T-cell (primary cell): ENCODE measurements at regions of chr1 and their contacts with region 1.

Region 1: GRCh38 chr1:178942285-178943198 is 71.7 kb upstream of the ANGPTL1 start:
- DNase-seq: no peak
- ATAC-seq: no peak
- H3K4me3 ChIP-seq: no peak overlapping the region
- H3K4me3 Mint-ChIP-seq: no peak overlapping the region
- H3K27ac ChIP-seq: no peak overlapping the region
- H3K27ac Mint-ChIP-seq: no peak overlapping the region
- H3K4me1 ChIP-seq: no peaks in the 10 kb centered on the region
- H3K4me1 Mint-ChIP-seq: no peaks in the 10 kb centered on the region
- H3K27me3 ChIP-seq: peaks cover 0 to 23% of the 10 kb centered on the region in 2 experiments
- H3K27me3 Mint-ChIP-seq: peaks cover 7 to 11% of the 10 kb centered on the region in 2 donors

Region 2: GRCh38 chr1:178706432-178706831 is 236.1 kb before region 1 on chr1:
- CTCF ChIA-PET with region 1: no interaction called
- POLR2A ChIA-PET with region 1: interaction called in 1 of 2 experiments, 16 read pairs
- DNase-seq: no peak
- ATAC-seq: no peak
- H3K4me3 ChIP-seq: no peak overlapping the region
- H3K4me3 Mint-ChIP-seq: no peak overlapping the region
- H3K27ac ChIP-seq: no peak overlapping the region
- H3K27ac Mint-ChIP-seq: no peak overlapping the region
- H3K4me1 ChIP-seq: no peaks in the 10 kb centered on the region
- H3K4me1 Mint-ChIP-seq: no peaks in the 10 kb centered on the region
- H3K27me3 ChIP-seq: no peaks in the 10 kb centered on the region
- H3K27me3 Mint-ChIP-seq: peaks cover 17 to 32% of the 10 kb centered on the region in 2 donors